ENCODE measurements at regions of chr12 and their contacts with region 1.

Region 1: DNA sequence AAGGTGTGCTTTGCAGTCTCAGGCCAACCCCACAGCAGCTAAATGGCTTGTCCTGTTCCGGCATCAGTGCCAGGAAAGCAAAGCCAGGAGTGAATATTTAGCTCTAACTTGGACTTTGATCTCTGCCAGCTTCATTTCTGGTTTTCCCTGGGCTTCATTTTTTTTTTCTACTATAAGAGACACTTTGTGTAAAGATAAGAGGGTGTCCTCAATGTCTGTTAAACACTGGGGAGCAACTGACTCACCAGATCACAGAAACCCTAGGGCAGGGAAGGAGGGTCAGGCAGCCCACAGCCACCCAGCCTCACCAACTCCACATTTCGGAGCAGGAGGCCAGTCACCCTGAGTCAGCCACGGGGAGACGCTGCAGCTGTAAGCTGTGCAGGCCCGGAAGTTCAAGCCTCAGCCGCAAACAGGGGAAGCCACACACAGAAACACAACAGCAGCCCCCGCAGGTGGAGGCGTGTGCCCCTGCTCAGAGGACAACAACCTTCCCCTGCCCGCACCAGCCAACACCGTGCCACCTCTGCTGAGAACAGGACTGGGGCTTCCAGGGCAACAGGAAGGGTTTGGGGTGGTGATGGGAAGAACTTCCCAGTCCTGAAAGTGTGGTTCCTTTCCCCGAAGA is 6.3 kb downstream of the TNFRSF1A start:
- DNase-seq: peak; percentile 64 to 66
- H3K4me3 ChIP-seq: peak overlapping the region; percentile 15; the same call in 1 of the 2 replicates
- H3K4me3 Mint-ChIP-seq: no peak overlapping the region
- H3K27ac Mint-ChIP-seq: no peak overlapping the region
- H3K4me1 ChIP-seq: peaks cover 48% of the 10 kb centered on the region
- H3K4me1 Mint-ChIP-seq: peaks cover 7% of the 10 kb centered on the region
- H3K27me3 ChIP-seq: no peaks in the 10 kb centered on the region
- H3K27me3 Mint-ChIP-seq: no peaks in the 10 kb centered on the region
- CTCF ChIP-seq: peak in 1 of 2 experiments; percentile 56

Region 2: DNA sequence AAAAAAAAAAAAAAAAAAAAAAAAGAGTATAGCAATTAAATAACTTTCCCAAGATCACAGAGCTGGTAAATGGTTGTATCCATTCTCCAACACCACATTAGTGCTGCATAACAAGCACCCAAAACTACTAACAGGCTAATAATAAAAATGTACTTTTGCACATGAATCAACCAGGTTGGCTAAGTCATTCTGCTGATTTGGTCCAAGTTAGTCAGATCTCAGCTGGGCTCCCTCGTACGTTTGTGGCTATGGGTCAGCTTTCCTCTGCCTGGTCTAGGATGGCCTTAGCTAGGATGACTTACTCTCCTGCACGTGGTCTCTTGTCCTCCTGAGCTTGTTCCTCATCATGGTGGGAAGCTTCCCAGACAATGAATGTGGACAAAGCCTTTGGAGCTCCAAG is 32.9 kb before region 1 on chr12:
- CTCF ChIA-PET with region 1: no interaction called
- POLR2A ChIA-PET with region 1: no interaction called
- intact Hi-C with region 1: no loop called
- DNase-seq: no peak
- H3K4me3 ChIP-seq: no peak overlapping the region
- H3K4me3 Mint-ChIP-seq: no peak overlapping the region
- H3K27ac Mint-ChIP-seq: no peak overlapping the region
- H3K4me1 ChIP-seq: peaks cover 47% of the 10 kb centered on the region
- H3K4me1 Mint-ChIP-seq: peaks cover 45% of the 10 kb centered on the region
- H3K27me3 ChIP-seq: no peaks in the 10 kb centered on the region
- H3K27me3 Mint-ChIP-seq: no peaks in the 10 kb centered on the region
- CTCF ChIP-seq: no peak

Region 3: GRCh38 chr12:6323340-6323994 is 12.1 kb before region 1 on chr12:
- CTCF ChIA-PET with region 1: interaction called, 37 read pairs
- POLR2A ChIA-PET with region 1: interaction called, 22 read pairs
- intact Hi-C with region 1: loop called (anchors 1 kb)
- DNase-seq: peak; percentile 70 to 80
- H3K4me3 ChIP-seq: no peak overlapping the region
- H3K4me3 Mint-ChIP-seq: no peak overlapping the region
- H3K27ac Mint-ChIP-seq: peak overlapping the region; percentile 88
- H3K4me1 ChIP-seq: peaks cover 20% of the 10 kb centered on the region
- H3K4me1 Mint-ChIP-seq: peaks cover 19% of the 10 kb centered on the region
- H3K27me3 ChIP-seq: no peaks in the 10 kb centered on the region
- H3K27me3 Mint-ChIP-seq: no peaks in the 10 kb centered on the region
- CTCF ChIP-seq: peak; percentile 61 to 87

Region 4: GRCh38 chr12:6367065-6367968 is 31.8 kb after region 1 on chr12:
- CTCF ChIA-PET with region 1: interaction called, 32 read pairs
- POLR2A ChIA-PET with region 1: interaction called, 42 read pairs
- intact Hi-C with region 1: loop called (anchors 1 kb)
- DNase-seq: peak in 1 of 2 experiments; percentile 29
- H3K4me3 ChIP-seq: no peak overlapping the region
- H3K4me3 Mint-ChIP-seq: no peak overlapping the region
- H3K27ac Mint-ChIP-seq: peak overlapping the region; percentile 12
- H3K4me1 ChIP-seq: peaks cover 25% of the 10 kb centered on the region
- H3K4me1 Mint-ChIP-seq: peaks cover 38% of the 10 kb centered on the region
- H3K27me3 ChIP-seq: no peaks in the 10 kb centered on the region
- H3K27me3 Mint-ChIP-seq: no peaks in the 10 kb centered on the region
- CTCF ChIP-seq: peak in 1 of 2 experiments; percentile 1

Region 5: GRCh38 chr12:6383572-6384498 is 48.3 kb after region 1 on chr12 and contains the start of gene LTBR:
- CTCF ChIA-PET with region 1: interaction called, 11 read pairs
- POLR2A ChIA-PET with region 1: interaction called, 38 read pairs
- intact Hi-C with region 1: loop called (anchors 2 kb)
- DNase-seq: peak; percentile 97 to 99
- H3K4me3 ChIP-seq: peak within 1 kb of the TSS; percentile 92
- H3K4me3 Mint-ChIP-seq: peak within 1 kb of the TSS; percentile 96
- H3K27ac Mint-ChIP-seq: peak within 1 kb of the TSS; percentile 92
- H3K4me1 ChIP-seq: peaks cover 25% of the 10 kb centered on the region
- H3K4me1 Mint-ChIP-seq: peaks cover 15% of the 10 kb centered on the region
- H3K27me3 ChIP-seq: no peaks in the 10 kb centered on the region
- H3K27me3 Mint-ChIP-seq: no peaks in the 10 kb centered on the region
- CTCF ChIP-seq: peak in 1 of 2 experiments; percentile 48
- total RNA-seq, gene LTBR: 194 and 197 TPM in 2 replicates

Measured in Caco-2 (cell line).